Right ventricle myocardium superior (tissue), 1 donor: ENCODE measurements at regions of chr13 and their contacts with region 1.

Region 1: GRCh38 chr13:35712907-35713761 is 236.6 kb upstream of the MAB21L1 start:
- DNase-seq: no peak
- ATAC-seq: no peak

Region 2: GRCh38 chr13:35630551-35631275 is 82.4 kb before region 1 on chr13:
- intact Hi-C with region 1: loop called (anchors 10 kb)
- DNase-seq: no peak
- ATAC-seq: peak; percentile 90